ENCODE measurements at regions of chr1 and their contacts with region 1.

Region 1: GRCh38 chr1:199684686-199685273 is 342.7 kb upstream of the NR5A2 start:
- DNase-seq: peak in 1 of 2 experiments; percentile 53
- H3K4me3 ChIP-seq: no peak overlapping the region
- H3K4me3 Mint-ChIP-seq: no peak overlapping the region
- H3K27ac Mint-ChIP-seq: no peak overlapping the region
- H3K4me1 ChIP-seq: peaks cover 15% of the 10 kb centered on the region
- H3K4me1 Mint-ChIP-seq: peaks cover 7% of the 10 kb centered on the region
- H3K27me3 ChIP-seq: no peaks in the 10 kb centered on the region
- H3K27me3 Mint-ChIP-seq: no peaks in the 10 kb centered on the region
- CTCF ChIP-seq: peak; percentile 74 to 76

Region 2: DNA sequence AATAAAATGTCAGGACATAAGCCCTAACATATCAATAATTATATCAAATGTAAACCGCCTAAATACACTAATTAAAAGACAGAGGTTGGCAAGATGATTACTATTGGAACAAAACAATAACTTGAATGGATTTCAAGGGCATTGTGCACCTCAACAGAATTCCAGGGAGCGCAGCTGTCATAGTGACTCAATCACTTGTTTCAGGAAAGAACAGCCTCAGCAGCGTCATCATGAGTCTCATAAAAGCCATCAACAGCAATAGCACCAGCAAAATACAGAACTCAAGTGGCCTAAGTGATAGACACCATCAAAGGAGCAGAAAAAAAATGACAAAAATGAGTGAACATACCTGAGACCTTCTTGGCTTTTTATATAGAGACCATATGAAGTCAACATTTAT is 289.9 kb before region 1 on chr1:
- CTCF ChIA-PET with region 1: no interaction called
- POLR2A ChIA-PET with region 1: no interaction called
- intact Hi-C with region 1: no loop called
- DNase-seq: no peak
- H3K4me3 ChIP-seq: no peak overlapping the region
- H3K4me3 Mint-ChIP-seq: no peak overlapping the region
- H3K27ac Mint-ChIP-seq: no peak overlapping the region
- H3K4me1 ChIP-seq: no peaks in the 10 kb centered on the region
- H3K4me1 Mint-ChIP-seq: no peaks in the 10 kb centered on the region
- H3K27me3 ChIP-seq: no peaks in the 10 kb centered on the region
- H3K27me3 Mint-ChIP-seq: peaks cover 6% of the 10 kb centered on the region
- CTCF ChIP-seq: no peak

Region 3: GRCh38 chr1:199545780-199546179 is 139.0 kb before region 1 on chr1:
- CTCF ChIA-PET with region 1: no interaction called
- POLR2A ChIA-PET with region 1: no interaction called
- intact Hi-C with region 1: loop called (anchors 5 kb)
- DNase-seq: peak; percentile 45 to 46
- H3K4me3 ChIP-seq: no peak overlapping the region
- H3K4me3 Mint-ChIP-seq: no peak overlapping the region
- H3K27ac Mint-ChIP-seq: no peak overlapping the region
- H3K4me1 ChIP-seq: no peaks in the 10 kb centered on the region
- H3K4me1 Mint-ChIP-seq: no peaks in the 10 kb centered on the region
- H3K27me3 ChIP-seq: no peaks in the 10 kb centered on the region
- H3K27me3 Mint-ChIP-seq: peaks cover 6% of the 10 kb centered on the region
- CTCF ChIP-seq: peak in 1 of 2 experiments; percentile 39

Region 4: GRCh38 chr1:199725002-199725565 is 40.3 kb after region 1 on chr1:
- CTCF ChIA-PET with region 1: no interaction called
- POLR2A ChIA-PET with region 1: no interaction called
- intact Hi-C with region 1: no loop called
- DNase-seq: no peak
- H3K4me3 ChIP-seq: no peak overlapping the region
- H3K4me3 Mint-ChIP-seq: no peak overlapping the region
- H3K27ac Mint-ChIP-seq: no peak overlapping the region
- H3K4me1 ChIP-seq: peaks cover 6% of the 10 kb centered on the region; the same call in 1 of the 2 replicates
- H3K4me1 Mint-ChIP-seq: no peaks in the 10 kb centered on the region
- H3K27me3 ChIP-seq: no peaks in the 10 kb centered on the region
- H3K27me3 Mint-ChIP-seq: peaks cover 3% of the 10 kb centered on the region
- CTCF ChIP-seq: no peak

Region 5: GRCh38 chr1:200038981-200039848 is 354.4 kb after region 1 on chr1:
- CTCF ChIA-PET with region 1: interaction called, 3 read pairs
- POLR2A ChIA-PET with region 1: no interaction called
- intact Hi-C with region 1: loop called (anchors 10 kb)
- DNase-seq: peak; percentile 54 to 55
- H3K4me3 ChIP-seq: peak overlapping the region; percentile 69
- H3K4me3 Mint-ChIP-seq: peak overlapping the region; percentile 95
- H3K27ac Mint-ChIP-seq: no peak overlapping the region
- H3K4me1 ChIP-seq: 0 out of 2 replicates have a peak, but pooled peaks cover 4% of the 10 kb centered on the region
- H3K4me1 Mint-ChIP-seq: peaks cover 13% of the 10 kb centered on the region
- H3K27me3 ChIP-seq: no peaks in the 10 kb centered on the region
- H3K27me3 Mint-ChIP-seq: no peaks in the 10 kb centered on the region
- CTCF ChIP-seq: no peak

Region 6: GRCh38 chr1:200306944-200307754 is 622.4 kb after region 1 on chr1:
- CTCF ChIA-PET with region 1: no interaction called
- POLR2A ChIA-PET with region 1: no interaction called
- intact Hi-C with region 1: loop called (anchors 1 kb)
- DNase-seq: peak in 1 of 2 experiments; percentile 47
- H3K4me3 ChIP-seq: no peak overlapping the region
- H3K4me3 Mint-ChIP-seq: no peak overlapping the region
- H3K27ac Mint-ChIP-seq: no peak overlapping the region
- H3K4me1 ChIP-seq: no peaks in the 10 kb centered on the region
- H3K4me1 Mint-ChIP-seq: no peaks in the 10 kb centered on the region
- H3K27me3 ChIP-seq: no peaks in the 10 kb centered on the region
- H3K27me3 Mint-ChIP-seq: no peaks in the 10 kb centered on the region
- CTCF ChIP-seq: peak; percentile 77 to 83

Region 7: DNA sequence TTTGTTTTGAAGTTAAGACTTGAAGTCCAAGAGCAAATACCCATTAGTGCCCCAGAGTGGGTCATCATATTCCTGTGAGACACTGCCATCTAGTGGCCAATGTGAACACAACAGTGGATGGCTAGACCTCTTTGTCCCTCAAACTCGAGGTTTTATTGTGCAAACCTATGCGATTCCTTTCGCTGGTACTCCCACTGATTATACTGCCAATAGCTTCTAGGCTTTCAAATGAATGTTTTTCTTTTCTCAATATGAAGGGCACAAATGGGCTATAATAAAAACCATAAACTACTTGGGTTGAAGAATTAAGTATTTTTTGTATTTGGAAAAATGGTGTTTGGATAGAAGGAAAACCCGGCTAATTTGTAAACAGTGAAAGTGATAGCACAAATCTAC is 825.4 kb after region 1 on chr1:
- CTCF ChIA-PET with region 1: no interaction called
- POLR2A ChIA-PET with region 1: no interaction called
- intact Hi-C with region 1: loop called (anchors 1 kb)
- DNase-seq: peak; percentile 73 to 83
- H3K4me3 ChIP-seq: no peak overlapping the region
- H3K4me3 Mint-ChIP-seq: no peak overlapping the region
- H3K27ac Mint-ChIP-seq: no peak overlapping the region
- H3K4me1 ChIP-seq: 0 out of 2 replicates have a peak, but pooled peaks cover 5% of the 10 kb centered on the region
- H3K4me1 Mint-ChIP-seq: no peaks in the 10 kb centered on the region
- H3K27me3 ChIP-seq: no peaks in the 10 kb centered on the region
- H3K27me3 Mint-ChIP-seq: peaks cover 8% of the 10 kb centered on the region
- CTCF ChIP-seq: peak; percentile 83 to 87